Breast epithelium (tissue), 4 donors: ENCODE measurements at regions of chr12 and their contacts with region 1.

Region 1: GRCh38 chr12:53811606-53812005 is 59.8 kb upstream of the CISTR start:
- DNase-seq: no peak
- H3K4me3 ChIP-seq: no peak overlapping the region
- H3K27ac ChIP-seq: no peak overlapping the region
- H3K4me1 ChIP-seq: no peaks in the 10 kb centered on the region
- H3K27me3 ChIP-seq: no peaks in the 10 kb centered on the region
- CTCF ChIP-seq: no peak
- POLR2A ChIP-seq: no peak

Region 2: GRCh38 chr12:53652366-53652765 is 159.2 kb before region 1 on chr12:
- intact Hi-C with region 1: no loop called
- DNase-seq: no peak
- H3K4me3 ChIP-seq: no peak overlapping the region
- H3K27ac ChIP-seq: no peak overlapping the region
- H3K4me1 ChIP-seq: peaks cover 0 to 4% of the 10 kb centered on the region in 2 donors
- H3K27me3 ChIP-seq: no peaks in the 10 kb centered on the region
- CTCF ChIP-seq: no peak
- POLR2A ChIP-seq: no peak

Region 3: GRCh38 chr12:53791735-53792326 is 19.8 kb before region 1 on chr12:
- intact Hi-C with region 1: no loop called
- DNase-seq: no peak
- H3K4me3 ChIP-seq: no peak overlapping the region
- H3K27ac ChIP-seq: no peak overlapping the region
- H3K4me1 ChIP-seq: no peaks in the 10 kb centered on the region
- H3K27me3 ChIP-seq: no peaks in the 10 kb centered on the region
- CTCF ChIP-seq: peak in 2 of 3 donors; percentile 15 to 22
- POLR2A ChIP-seq: no peak

Region 4: DNA sequence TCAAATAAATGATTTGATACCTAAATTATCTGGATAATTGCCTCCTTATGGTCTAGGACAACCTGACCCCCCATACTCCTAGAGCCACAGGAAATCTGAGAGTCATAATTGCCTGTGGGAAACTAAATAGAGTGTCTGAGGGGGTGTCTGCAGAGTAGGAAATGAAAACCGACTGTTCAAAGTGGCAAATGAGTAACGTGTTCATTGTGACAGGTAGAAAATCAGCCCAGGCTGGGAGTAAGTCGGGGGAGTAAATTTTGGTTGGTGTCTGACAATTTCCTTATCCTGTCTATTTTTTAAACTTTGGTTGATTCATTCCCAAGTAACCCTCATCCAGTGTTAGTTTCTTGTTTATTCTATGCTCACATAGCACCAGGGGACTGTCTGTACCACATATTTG is 75.4 kb after region 1 on chr12:
- intact Hi-C with region 1: no loop called
- DNase-seq: no peak
- H3K4me3 ChIP-seq: no peak overlapping the region
- H3K27ac ChIP-seq: no peak overlapping the region
- H3K4me1 ChIP-seq: no peaks in the 10 kb centered on the region
- H3K27me3 ChIP-seq: no peaks in the 10 kb centered on the region
- CTCF ChIP-seq: no peak
- POLR2A ChIP-seq: no peak

Region 5: GRCh38 chr12:54917001-54917488 is 1105.4 kb after region 1 on chr12:
- intact Hi-C with region 1: loop called (anchors 10 kb)
- DNase-seq: no peak
- H3K4me3 ChIP-seq: no peak overlapping the region
- H3K27ac ChIP-seq: no peak overlapping the region
- H3K4me1 ChIP-seq: no peaks in the 10 kb centered on the region
- H3K27me3 ChIP-seq: no peaks in the 10 kb centered on the region
- CTCF ChIP-seq: no peak
- POLR2A ChIP-seq: no peak